ENCODE measurements at regions of chr3 and their contacts with region 1.

Region 1: DNA sequence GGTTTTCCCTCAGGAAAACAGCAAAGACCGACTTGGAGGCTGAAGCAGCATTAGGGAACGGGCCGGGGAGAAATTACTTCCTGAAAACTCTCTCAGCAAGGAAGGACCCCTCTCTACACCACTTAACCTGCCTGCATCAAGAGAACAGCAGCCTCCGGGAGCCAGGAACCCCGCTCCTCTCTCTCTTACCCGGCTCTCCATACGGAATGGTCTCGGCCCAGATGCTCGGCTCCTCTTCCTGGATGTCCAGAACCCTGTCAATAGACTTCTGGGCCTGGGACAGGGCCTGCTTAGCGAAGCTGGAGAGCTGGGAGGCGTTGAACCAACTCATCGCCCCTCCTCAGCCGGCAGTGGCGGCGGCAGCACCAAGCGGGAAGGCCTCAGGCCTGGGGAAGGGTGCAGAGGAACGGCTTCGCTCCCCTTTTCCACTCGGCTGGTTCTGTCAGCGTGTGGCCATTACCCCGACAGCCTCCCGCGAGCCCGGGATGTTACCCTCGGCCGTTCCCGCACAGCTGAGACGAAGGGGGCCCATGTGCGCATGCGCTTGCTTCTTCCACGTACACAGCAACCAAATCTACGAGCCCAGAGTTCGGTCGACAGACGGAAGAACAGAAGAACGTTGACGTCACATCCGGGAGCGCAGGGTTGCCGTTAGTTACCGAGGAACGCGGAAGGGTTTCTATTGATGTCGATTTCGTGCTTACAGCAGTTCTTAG is at the start of gene TMF1:
- DNase-seq: peak; percentile 94 to 100 (median 98)
- ATAC-seq: peak; percentile 86
- H3K4me3 ChIP-seq: peak within 1 kb of the TSS; percentile 82 to 84
- H3K4me3 Mint-ChIP-seq: peak within 1 kb of the TSS; percentile 98
- H3K27ac ChIP-seq: peak within 1 kb of the TSS; percentile 93 to 97
- H3K27ac Mint-ChIP-seq: peak within 1 kb of the TSS; percentile 99
- H3K4me1 ChIP-seq: peaks cover 31% of the 10 kb centered on the region
- H3K4me1 Mint-ChIP-seq: peaks cover 48% of the 10 kb centered on the region
- H3K27me3 ChIP-seq: no peaks in the 10 kb centered on the region
- H3K27me3 Mint-ChIP-seq: no peaks in the 10 kb centered on the region
- CTCF ChIP-seq: no peak
- total RNA-seq, gene TMF1: 97.9 to 103 TPM

Region 2: DNA sequence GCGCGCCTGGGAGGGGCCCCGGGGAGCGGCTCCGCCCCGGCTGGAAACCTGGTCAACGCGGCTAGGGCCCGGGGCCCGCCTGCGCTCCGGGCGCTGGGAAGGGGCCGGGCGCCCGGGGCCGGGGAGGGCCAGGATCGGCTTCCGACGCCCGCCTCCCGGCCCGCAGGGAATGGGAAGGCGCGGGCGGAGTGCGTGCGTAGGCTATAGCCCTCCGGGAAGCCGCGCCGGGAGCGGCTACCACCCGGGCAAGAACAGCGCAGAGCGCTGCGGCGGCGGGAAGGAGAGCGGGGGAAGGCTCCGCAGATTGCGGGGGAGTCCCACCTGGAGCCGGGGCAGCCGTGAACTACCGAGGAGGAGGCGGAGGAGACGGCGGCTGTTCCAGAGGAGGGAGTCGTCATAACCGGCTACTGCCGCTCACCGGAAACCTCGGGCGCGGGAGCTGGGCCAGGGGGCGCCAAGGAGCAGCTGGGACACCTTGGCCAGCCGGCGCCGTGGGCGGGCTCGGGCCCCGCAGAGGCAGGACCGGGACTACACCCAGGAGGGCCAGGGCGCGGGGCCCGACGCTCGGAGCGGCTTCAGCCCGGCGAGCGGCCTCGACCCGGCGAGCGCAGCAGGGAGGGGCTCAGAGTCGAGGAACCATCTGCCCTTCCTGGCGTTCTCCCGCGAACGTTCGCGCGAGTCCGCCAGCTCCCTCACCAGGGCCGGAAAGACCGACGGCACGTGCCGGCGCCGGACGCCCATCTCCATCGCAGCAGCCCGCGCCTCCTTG is 38.5 kb before region 1 on chr3 and contains the start of gene EOGT:
- CTCF ChIA-PET with region 1: no interaction called
- POLR2A ChIA-PET with region 1: interaction called, 4 read pairs
- intact Hi-C with region 1: loop called in 1 of 2 experiments (anchors 1 kb)
- DNase-seq: peak; percentile 50 to 87 (median 81)
- ATAC-seq: peak; percentile 79
- H3K4me3 ChIP-seq: peak within 1 kb of the TSS; percentile 76 to 81
- H3K4me3 Mint-ChIP-seq: peak within 1 kb of the TSS; percentile 88
- H3K27ac ChIP-seq: peak within 1 kb of the TSS; percentile 44 to 72
- H3K27ac Mint-ChIP-seq: peak within 1 kb of the TSS; percentile 87
- H3K4me1 ChIP-seq: peaks cover 6% of the 10 kb centered on the region
- H3K4me1 Mint-ChIP-seq: peaks cover 26% of the 10 kb centered on the region
- H3K27me3 ChIP-seq: no peaks in the 10 kb centered on the region
- H3K27me3 Mint-ChIP-seq: no peaks in the 10 kb centered on the region
- CTCF ChIP-seq: peak; percentile 56
- total RNA-seq, gene EOGT: 9.9 to 15.2 TPM

Region 3: DNA sequence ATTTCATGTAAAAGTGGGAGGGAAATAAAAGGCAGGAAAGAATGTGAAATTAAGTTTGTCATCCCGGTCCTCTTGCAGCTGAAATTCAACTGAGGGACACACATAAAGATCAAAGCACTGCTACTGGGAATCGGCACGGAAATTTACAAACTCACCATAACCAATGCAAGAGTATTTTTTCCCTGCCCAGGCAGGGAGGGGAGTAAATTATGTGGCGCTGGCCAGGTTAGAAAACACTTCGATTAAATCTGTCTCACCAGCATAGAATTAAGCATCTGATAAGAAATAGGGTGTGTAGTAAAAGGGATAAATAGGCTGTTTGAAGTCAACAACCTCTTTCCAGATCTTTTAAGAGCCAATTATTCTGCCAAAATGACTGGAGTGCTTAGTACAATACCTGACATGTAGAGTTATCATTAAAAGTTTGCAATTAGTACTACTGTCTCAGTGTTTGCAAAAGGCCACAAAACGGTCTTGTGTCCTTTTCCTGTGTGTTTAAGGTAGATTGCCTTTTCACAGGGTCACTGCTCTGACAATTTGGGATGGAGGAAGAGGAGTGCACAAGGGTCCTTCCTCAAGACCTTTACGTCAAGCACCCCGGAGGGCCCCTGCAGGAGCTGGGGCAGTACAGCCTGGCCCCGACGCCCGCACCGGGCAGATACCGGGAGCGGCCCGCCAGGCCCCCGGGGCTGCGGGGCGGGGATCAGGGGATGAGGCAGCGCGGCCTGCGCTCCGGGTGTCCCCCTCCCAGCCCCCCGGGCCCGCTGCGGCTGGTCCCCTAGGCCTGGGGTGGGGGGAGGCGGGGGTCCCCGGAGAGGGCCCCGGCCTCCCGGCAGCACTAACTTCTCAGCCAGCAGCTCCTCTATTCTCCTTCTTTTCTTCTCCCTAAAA is 27.6 kb after region 1 on chr3:
- CTCF ChIA-PET with region 1: interaction called, 5 read pairs
- POLR2A ChIA-PET with region 1: interaction called, 40 read pairs
- intact Hi-C with region 1: loop called (anchors 1 kb)
- DNase-seq: peak in 2 of 9 experiments; percentile 33 to 46
- ATAC-seq: peak; percentile 8
- H3K4me3 ChIP-seq: peak overlapping the region; percentile 60 to 66
- H3K4me3 Mint-ChIP-seq: peak overlapping the region; percentile 80
- H3K27ac ChIP-seq: peak overlapping the region in 1 of 2 experiments; percentile 56
- H3K27ac Mint-ChIP-seq: peak overlapping the region; percentile 89
- H3K4me1 ChIP-seq: peaks cover 60% of the 10 kb centered on the region
- H3K4me1 Mint-ChIP-seq: peaks cover 68% of the 10 kb centered on the region
- H3K27me3 ChIP-seq: no peaks in the 10 kb centered on the region
- H3K27me3 Mint-ChIP-seq: no peaks in the 10 kb centered on the region
- CTCF ChIP-seq: no peak

Region 4: GRCh38 chr3:69092030-69092516 is 40.2 kb after region 1 on chr3:
- CTCF ChIA-PET with region 1: interaction called, 3 read pairs
- POLR2A ChIA-PET with region 1: interaction called, 16 read pairs
- intact Hi-C with region 1: loop called in 1 of 2 experiments (anchors 5 kb)
- DNase-seq: peak in 3 of 9 experiments; percentile 26 to 77 (median 53)
- ATAC-seq: peak; percentile 71
- H3K4me3 ChIP-seq: peak overlapping the region; percentile 13 to 34
- H3K4me3 Mint-ChIP-seq: peak overlapping the region; percentile 73
- H3K27ac ChIP-seq: peak overlapping the region; percentile 50 to 85
- H3K27ac Mint-ChIP-seq: peak overlapping the region; percentile 94
- H3K4me1 ChIP-seq: peaks cover 89% of the 10 kb centered on the region
- H3K4me1 Mint-ChIP-seq: peaks cover 92% of the 10 kb centered on the region
- H3K27me3 ChIP-seq: no peaks in the 10 kb centered on the region
- H3K27me3 Mint-ChIP-seq: no peaks in the 10 kb centered on the region
- CTCF ChIP-seq: no peak

Region 5: GRCh38 chr3:69200384-69201068 is 148.6 kb after region 1 on chr3:
- CTCF ChIA-PET with region 1: no interaction called
- POLR2A ChIA-PET with region 1: no interaction called
- intact Hi-C with region 1: loop called in 1 of 2 experiments (anchors 5 kb)
- DNase-seq: peak in 2 of 9 experiments; percentile 24
- ATAC-seq: no peak
- H3K4me3 ChIP-seq: no peak overlapping the region
- H3K4me3 Mint-ChIP-seq: peak overlapping the region; percentile 88
- H3K27ac ChIP-seq: no peak overlapping the region
- H3K27ac Mint-ChIP-seq: peak overlapping the region; percentile 5
- H3K4me1 ChIP-seq: peaks cover 25% of the 10 kb centered on the region
- H3K4me1 Mint-ChIP-seq: peaks cover 41% of the 10 kb centered on the region
- H3K27me3 ChIP-seq: no peaks in the 10 kb centered on the region
- H3K27me3 Mint-ChIP-seq: no peaks in the 10 kb centered on the region
- CTCF ChIP-seq: no peak

Measured in CD8-positive, alpha-beta T cell (primary cell).